Pancreas (tissue), 10 donors: ENCODE measurements at regions of chr7 and their contacts with region 1.

Region 1: DNA sequence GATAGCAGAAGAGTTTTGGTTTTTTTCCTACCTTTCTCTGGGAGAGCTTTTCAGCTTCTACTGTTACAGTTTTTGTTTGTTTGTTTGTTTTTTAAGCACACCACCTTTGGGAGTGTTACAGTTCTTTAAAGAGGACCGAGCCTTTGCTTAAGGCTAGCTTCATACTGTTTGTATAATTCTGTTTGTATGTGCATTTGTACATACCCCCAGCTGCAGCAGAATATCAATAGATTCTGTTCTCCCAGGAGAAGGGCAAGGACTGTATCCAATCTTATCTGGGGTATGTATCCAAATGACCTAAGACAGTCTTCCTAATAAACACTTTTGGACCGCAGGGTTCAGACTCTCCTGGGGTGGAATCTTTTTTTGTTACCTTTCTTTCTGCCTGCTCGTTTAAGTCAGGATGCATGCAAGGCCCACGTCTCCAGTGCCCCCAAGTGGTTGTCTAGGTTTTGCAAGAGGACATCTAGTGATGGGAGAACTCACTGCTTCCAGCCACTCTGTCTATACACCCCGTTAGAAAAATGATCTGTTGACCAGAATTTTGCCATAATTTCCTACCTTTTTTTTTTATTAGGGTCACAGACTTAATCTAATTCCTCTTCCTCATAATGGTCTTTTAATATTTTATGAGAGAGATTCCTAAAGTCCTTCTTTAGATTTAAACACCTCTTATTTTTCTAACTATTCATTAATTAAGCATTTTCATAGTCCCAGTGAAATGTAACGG is 23.9 kb downstream of the NRF1 start:
- DNase-seq: peak in 5 of 6 donors; percentile 40 to 57 (median 45)
- ATAC-seq: peak; percentile 75 to 99 (median 97)
- H3K4me3 ChIP-seq: no peak overlapping the region
- H3K27ac ChIP-seq: no peak overlapping the region
- H3K4me1 ChIP-seq: peaks cover 0 to 8% (median 8%) of the 10 kb centered on the region in 3 donors
- H3K27me3 ChIP-seq: no peaks in the 10 kb centered on the region
- CTCF ChIP-seq: peak; percentile 36 to 62 (median 56)

Region 2: DNA sequence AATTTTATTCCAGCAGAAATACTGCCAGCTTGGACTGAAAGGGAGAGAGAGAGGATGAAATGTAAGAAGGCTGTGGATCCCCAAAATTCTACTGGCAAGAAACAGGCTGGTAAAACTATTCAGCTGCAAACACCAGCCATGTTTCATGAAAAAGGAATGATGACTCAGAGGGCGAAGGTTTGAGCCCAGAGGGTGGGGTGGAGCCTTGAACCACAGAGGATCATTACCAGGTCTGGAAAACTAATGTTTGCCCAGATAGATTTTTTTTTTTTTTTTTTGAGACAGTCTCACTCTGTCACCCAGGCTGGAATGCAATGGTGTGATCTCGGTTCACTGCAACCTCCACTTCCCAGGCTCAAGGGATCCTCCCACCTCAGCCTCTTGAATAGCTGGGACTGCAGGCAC is 65.7 kb before region 1 on chr7:
- intact Hi-C with region 1: loop called in 1 of 3 experiments (anchors 10 kb)
- DNase-seq: no peak
- ATAC-seq: peak in 3 of 4 donors; percentile 39 to 60 (median 56)
- H3K4me3 ChIP-seq: no peak overlapping the region
- H3K27ac ChIP-seq: no peak overlapping the region
- H3K4me1 ChIP-seq: no peaks in the 10 kb centered on the region
- H3K27me3 ChIP-seq: no peaks in the 10 kb centered on the region
- CTCF ChIP-seq: no peak